Heart left ventricle (tissue), 16 donors: ENCODE measurements at regions of chr18 and their contacts with region 1.

Region 1: GRCh38 chr18:37689841-37690240 is 124.2 kb upstream of the CELF4 start:
- DNase-seq: no peak
- ATAC-seq: no peak
- H3K4me3 ChIP-seq: no peak overlapping the region
- H3K27ac ChIP-seq: no peak overlapping the region
- H3K4me1 ChIP-seq: no peaks in the 10 kb centered on the region
- H3K27me3 ChIP-seq: no peaks in the 10 kb centered on the region
- CTCF ChIP-seq: no peak
- POLR2A ChIP-seq: no peak

Region 2: GRCh38 chr18:37701967-37702366 is 12.1 kb after region 1 on chr18:
- intact Hi-C with region 1: no loop called
- DNase-seq: peak in 1 of 5 donors; percentile 46
- ATAC-seq: peak in 1 of 4 donors; percentile 39
- H3K4me3 ChIP-seq: no peak overlapping the region
- H3K27ac ChIP-seq: no peak overlapping the region
- H3K4me1 ChIP-seq: no peaks in the 10 kb centered on the region
- H3K27me3 ChIP-seq: peaks cover 0 to 5% (median 0%) of the 10 kb centered on the region in 9 donors
- CTCF ChIP-seq: no peak
- POLR2A ChIP-seq: no peak

Region 3: DNA sequence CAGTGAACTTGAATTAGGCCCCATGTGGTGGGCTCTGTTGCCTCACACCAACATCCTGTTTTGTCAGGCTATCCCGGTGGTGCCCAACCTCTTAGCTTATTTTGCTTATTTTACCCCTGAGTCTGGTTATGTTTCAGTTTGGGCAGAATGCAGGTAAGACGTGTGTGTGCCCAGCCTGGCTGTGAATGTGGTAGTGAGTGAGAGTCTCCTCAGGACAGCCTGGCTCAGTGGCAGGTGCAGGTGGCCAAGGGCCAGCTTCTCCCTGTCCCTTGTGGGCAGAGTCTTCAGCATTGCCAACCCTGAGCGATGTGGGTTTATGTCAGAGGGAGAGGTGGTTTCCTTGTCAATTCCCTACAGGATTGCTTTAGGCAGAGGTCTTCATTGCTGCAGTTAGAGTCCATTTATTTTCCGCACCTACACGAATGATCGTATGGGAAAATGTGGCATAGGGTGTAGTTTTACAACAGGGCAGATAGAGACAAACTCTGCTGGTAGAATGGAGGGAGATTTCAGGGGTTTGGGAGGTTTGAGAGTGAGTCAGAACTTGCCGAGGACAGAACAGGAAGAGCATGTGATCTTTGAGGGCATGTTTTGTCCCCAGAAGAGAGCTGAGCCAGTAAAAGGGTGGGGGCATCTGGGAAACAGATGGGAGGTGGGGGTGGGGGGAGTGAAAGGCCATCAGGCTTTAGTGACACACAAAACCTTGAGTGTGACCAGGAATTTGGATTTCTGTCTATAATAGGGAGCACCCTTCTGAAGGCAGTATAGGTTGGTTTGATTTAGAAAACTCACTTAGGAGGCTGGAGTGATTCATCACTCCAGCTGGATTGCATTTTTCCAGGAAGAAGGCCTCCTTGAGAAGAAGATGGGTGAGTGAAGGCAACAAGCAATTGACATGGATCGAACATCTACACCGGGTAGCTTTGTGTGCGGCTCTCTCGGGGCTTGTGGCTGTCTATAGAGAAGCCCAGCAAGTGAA is 32.0 kb after region 1 on chr18:
- intact Hi-C with region 1: loop called in 1 of 10 experiments (anchors 5 kb)
- DNase-seq: no peak
- ATAC-seq: no peak
- H3K4me3 ChIP-seq: no peak overlapping the region
- H3K27ac ChIP-seq: no peak overlapping the region
- H3K4me1 ChIP-seq: no peaks in the 10 kb centered on the region
- H3K27me3 ChIP-seq: peaks cover 0 to 5% (median 0%) of the 10 kb centered on the region in 9 donors
- CTCF ChIP-seq: no peak
- POLR2A ChIP-seq: no peak